Endothelial cell of umbilical vein (primary cell): ENCODE measurements at regions of chr3 and their contacts with region 1.

Region 1: DNA sequence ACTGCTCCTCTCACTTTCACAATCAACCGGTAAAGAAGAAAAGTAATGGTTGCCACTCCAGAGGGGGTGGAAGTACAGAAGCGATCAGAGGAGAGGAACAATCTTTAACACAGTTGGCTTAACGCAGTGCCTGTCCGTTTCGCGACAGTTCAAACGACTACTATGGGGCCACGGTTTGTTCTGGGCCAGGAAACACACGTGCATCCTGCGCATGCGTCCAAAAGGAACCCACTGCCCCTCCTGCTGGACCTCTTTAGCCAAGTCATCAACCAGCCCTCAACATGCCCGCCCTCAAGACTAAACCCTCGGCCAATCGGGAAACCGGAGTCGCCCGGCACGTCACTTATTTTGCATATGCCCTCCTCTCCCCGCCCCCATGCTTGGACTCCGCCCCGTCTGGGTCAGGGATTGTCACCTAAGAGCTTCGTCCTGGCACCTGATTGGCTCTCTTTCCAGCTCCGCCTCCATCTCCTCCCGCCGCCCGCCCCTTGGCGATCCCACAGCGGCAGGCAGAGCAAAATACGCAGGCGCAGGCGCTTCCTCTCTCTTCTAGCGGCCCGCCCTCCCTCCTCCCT is 345 bp upstream of the CDV3 start:
- DNase-seq: peak; percentile 100
- H3K4me3 ChIP-seq: peak overlapping the region in 2 of 3 experiments; percentile 5 to 97
- H3K27ac ChIP-seq: peak overlapping the region; percentile 77
- H3K4me1 ChIP-seq: peaks cover 67% of the 10 kb centered on the region
- H3K27me3 ChIP-seq: no peaks in the 10 kb centered on the region
- CTCF ChIP-seq: peak in 1 of 2 donors; percentile 29
- POLR2A ChIP-seq: peak; percentile 77

Region 2: GRCh38 chr3:132722164-132723024 is 850.7 kb before region 1 on chr3 and contains the start of gene NPHP3:
- CTCF ChIA-PET with region 1: interaction called, 4 read pairs
- POLR2A ChIA-PET with region 1: no interaction called
- dilution Hi-C with region 1: no loop called
- intact Hi-C with region 1: loop called (anchors 1 kb)
- DNase-seq: peak; percentile 93
- H3K4me3 ChIP-seq: peak within 1 kb of the TSS; percentile 86 to 98 (median 93)
- H3K27ac ChIP-seq: peak within 1 kb of the TSS; percentile 63
- H3K4me1 ChIP-seq: peaks cover 26% of the 10 kb centered on the region
- H3K27me3 ChIP-seq: no peaks in the 10 kb centered on the region
- CTCF ChIP-seq: no peak
- POLR2A ChIP-seq: peak; percentile 92
- total RNA-seq, gene NPHP3: 30.0 and 30.3 TPM in 2 replicates

Region 3: GRCh38 chr3:133464573-133464972 is 108.6 kb before region 1 on chr3:
- CTCF ChIA-PET with region 1: interaction called, 32 read pairs
- POLR2A ChIA-PET with region 1: interaction called, 4 read pairs
- dilution Hi-C with region 1: no loop called
- intact Hi-C with region 1: loop called (anchors 1 kb)
- DNase-seq: peak; percentile 52
- H3K4me3 ChIP-seq: no peak overlapping the region
- H3K27ac ChIP-seq: no peak overlapping the region
- H3K4me1 ChIP-seq: no peaks in the 10 kb centered on the region
- H3K27me3 ChIP-seq: peaks cover 4 to 13% of the 10 kb centered on the region in 2 experiments
- CTCF ChIP-seq: peak; percentile 13 to 25
- POLR2A ChIP-seq: no peak

Region 4: DNA sequence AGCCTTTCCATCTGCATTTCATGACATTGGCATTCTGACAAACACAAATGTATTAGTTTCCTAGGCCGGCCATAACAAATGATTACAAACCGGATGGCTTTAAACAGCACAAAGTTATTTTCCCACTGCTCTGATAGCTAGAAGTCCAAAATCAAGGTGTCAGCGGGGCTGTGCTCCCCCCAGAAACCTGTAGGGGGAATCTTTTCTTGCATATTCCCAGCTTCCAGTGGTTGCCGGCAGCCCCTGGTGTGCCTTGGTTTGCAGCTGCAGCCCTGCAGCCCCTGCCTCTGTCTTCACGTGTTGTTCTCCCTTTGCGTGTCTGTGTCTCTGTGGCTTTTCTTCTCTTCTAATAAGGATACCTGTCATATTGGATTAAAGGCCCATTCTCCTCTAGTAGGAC is 78.7 kb before region 1 on chr3:
- CTCF ChIA-PET with region 1: interaction called, 224 read pairs
- POLR2A ChIA-PET with region 1: interaction called, 3 read pairs
- dilution Hi-C with region 1: no loop called
- intact Hi-C with region 1: loop called (anchors 1 kb)
- DNase-seq: no peak
- H3K4me3 ChIP-seq: no peak overlapping the region
- H3K27ac ChIP-seq: no peak overlapping the region
- H3K4me1 ChIP-seq: peaks cover 6% of the 10 kb centered on the region
- H3K27me3 ChIP-seq: no peaks in the 10 kb centered on the region
- CTCF ChIP-seq: peak; percentile 44 to 46
- POLR2A ChIP-seq: no peak

Region 5: GRCh38 chr3:133531981-133532380 is 41.2 kb before region 1 on chr3:
- CTCF ChIA-PET with region 1: interaction called, 16 read pairs
- POLR2A ChIA-PET with region 1: interaction called, 4 read pairs
- dilution Hi-C with region 1: no loop called
- intact Hi-C with region 1: loop called (anchors 5 kb)
- DNase-seq: peak; percentile 67
- H3K4me3 ChIP-seq: no peak overlapping the region
- H3K27ac ChIP-seq: peak overlapping the region; percentile 49
- H3K4me1 ChIP-seq: peaks cover 21% of the 10 kb centered on the region
- H3K27me3 ChIP-seq: no peaks in the 10 kb centered on the region
- CTCF ChIP-seq: no peak
- POLR2A ChIP-seq: no peak

Region 6: DNA sequence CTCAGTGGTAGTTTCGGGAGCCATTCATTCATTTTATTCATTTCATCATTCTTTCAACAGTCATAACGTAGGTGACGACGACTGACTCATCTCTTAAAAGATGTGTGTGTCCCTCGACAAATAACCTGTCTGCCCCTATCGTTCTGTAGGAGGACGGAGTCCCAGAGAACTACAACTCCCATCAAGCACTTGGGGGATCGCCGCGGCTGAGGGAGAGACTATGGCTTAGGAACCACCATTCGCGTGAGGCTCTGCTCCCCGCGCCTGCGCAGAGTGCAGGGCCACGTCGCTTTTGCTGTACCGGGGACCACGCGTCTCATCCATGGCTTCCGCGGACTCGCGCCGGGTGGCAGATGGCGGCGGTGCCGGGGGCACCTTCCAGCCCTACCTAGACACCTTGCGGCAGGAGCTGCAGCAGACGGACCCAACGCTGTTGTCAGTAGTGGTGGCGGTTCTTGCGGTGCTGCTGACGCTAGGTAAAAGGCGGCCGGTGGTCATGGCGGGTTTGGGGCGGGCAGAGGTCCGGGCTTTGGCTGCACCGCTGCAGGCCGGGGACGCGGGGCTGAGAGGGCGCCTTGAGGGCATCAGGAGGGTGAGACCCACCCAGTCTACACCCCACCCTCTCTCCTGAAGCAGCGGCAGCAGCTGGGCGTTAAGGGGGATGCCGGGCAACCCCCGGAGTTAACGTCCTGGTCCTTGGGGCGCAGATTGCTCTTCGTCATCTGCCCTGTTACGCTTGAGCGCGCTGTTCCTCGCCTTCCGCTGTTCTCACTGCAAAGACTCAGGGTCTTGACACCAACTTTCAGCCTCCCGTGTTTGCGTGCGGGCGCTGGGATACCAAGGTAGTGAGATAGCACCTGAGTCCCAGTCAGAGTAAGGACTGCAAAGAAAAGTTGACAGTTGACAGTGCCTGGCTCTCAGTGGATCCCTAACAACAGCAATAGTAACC is 232.7 kb after region 1 on chr3 and contains the start of gene SRPRB:
- CTCF ChIA-PET with region 1: no interaction called
- POLR2A ChIA-PET with region 1: no interaction called
- dilution Hi-C with region 1: no loop called
- intact Hi-C with region 1: loop called (anchors 5 kb)
- DNase-seq: peak; percentile 95
- H3K4me3 ChIP-seq: peak within 1 kb of the TSS; percentile 71 to 95 (median 82)
- H3K27ac ChIP-seq: peak within 1 kb of the TSS; percentile 35
- H3K4me1 ChIP-seq: peaks cover 6% of the 10 kb centered on the region
- H3K27me3 ChIP-seq: peaks cover 3 to 7% of the 10 kb centered on the region in 2 experiments
- CTCF ChIP-seq: no peak
- POLR2A ChIP-seq: no peak
- total RNA-seq, gene SRPRB: 59.5 and 69.2 TPM in 2 replicates

Region 7: GRCh38 chr3:134364061-134364935 is 791.2 kb after region 1 on chr3:
- CTCF ChIA-PET with region 1: no interaction called
- POLR2A ChIA-PET with region 1: interaction called, 3 read pairs
- dilution Hi-C with region 1: no loop called
- intact Hi-C with region 1: loop called (anchors 10 kb)
- DNase-seq: peak; percentile 94
- H3K4me3 ChIP-seq: no peak overlapping the region
- H3K27ac ChIP-seq: peak overlapping the region; percentile 83
- H3K4me1 ChIP-seq: peaks cover 64% of the 10 kb centered on the region
- H3K27me3 ChIP-seq: no peaks in the 10 kb centered on the region
- CTCF ChIP-seq: no peak
- POLR2A ChIP-seq: peak; percentile 76